ENCODE measurements at regions of chr12 and their contacts with region 1.

Region 1: GRCh38 chr12:95217377-95218149 is at the starts of genes FGD6 and VEZT:
- DNase-seq: peak; percentile 99
- H3K4me3 ChIP-seq: peak within 1 kb of the TSS; percentile 86
- H3K27ac ChIP-seq: peak within 1 kb of the TSS; percentile 98
- H3K4me1 ChIP-seq: peaks cover 11% of the 10 kb centered on the region
- H3K27me3 ChIP-seq: no peaks in the 10 kb centered on the region
- CTCF ChIP-seq: peak; percentile 37
- total RNA-seq, gene FGD6: 9.8 to 21.8 TPM
- total RNA-seq, gene VEZT: 36.4 to 62.2 TPM

Region 2: DNA sequence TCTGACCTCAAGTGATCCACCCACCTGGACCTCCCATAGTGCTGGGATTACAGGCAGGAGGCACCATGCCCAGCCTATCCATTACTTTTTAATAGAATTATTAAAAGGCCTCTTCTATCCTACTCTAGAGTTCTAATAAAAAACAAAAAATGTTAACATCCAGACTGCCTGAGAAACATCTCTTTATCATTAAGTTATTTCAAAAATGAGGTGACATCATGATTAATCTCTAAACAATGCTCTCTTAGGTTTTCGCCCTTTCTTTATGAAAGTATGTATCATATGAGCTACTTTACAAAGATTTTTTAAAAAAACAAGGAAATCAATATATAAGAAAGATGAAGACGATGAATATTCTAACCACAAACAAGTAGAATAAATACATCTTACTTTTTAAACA is 52.9 kb before region 1 on chr12:
- intact Hi-C with region 1: loop called (anchors 5 kb)
- DNase-seq: no peak
- H3K4me3 ChIP-seq: no peak overlapping the region
- H3K27ac ChIP-seq: no peak overlapping the region
- H3K4me1 ChIP-seq: no peaks in the 10 kb centered on the region
- H3K27me3 ChIP-seq: no peaks in the 10 kb centered on the region
- CTCF ChIP-seq: no peak

Measured in colonic mucosa (tissue), 4 donors.